ENCODE measurements at regions of chr4 and their contacts with region 1.

Region 1: GRCh38 chr4:77959566-77960338 is 97.1 kb downstream of the MRPL1 start:
- DNase-seq: peak; percentile 34 to 60 (median 45)
- ATAC-seq: peak; percentile 66
- H3K4me3 ChIP-seq: no peak overlapping the region
- H3K27ac ChIP-seq: no peak overlapping the region
- H3K4me1 ChIP-seq: no peaks in the 10 kb centered on the region
- H3K27me3 ChIP-seq: no peaks in the 10 kb centered on the region
- CTCF ChIP-seq: peak; percentile 43 to 64 (median 44); a peak in 3 of 6 replicates
- EP300 ChIP-seq: no peak
- POLR2A ChIP-seq: no peak
- RAD21 ChIP-seq: peak; percentile 68 to 73

Region 2: GRCh38 chr4:77862478-77863216 is 97.1 kb before region 1 on chr4 and contains the start of gene MRPL1:
- CTCF ChIA-PET with region 1: no interaction called
- POLR2A ChIA-PET with region 1: no interaction called
- in situ Hi-C with region 1: no loop called
- intact Hi-C with region 1: loop called (anchors 5 kb)
- DNase-seq: peak; percentile 75 to 94 (median 80)
- ATAC-seq: peak; percentile 94
- H3K4me3 ChIP-seq: peak within 1 kb of the TSS; percentile 87
- H3K27ac ChIP-seq: peak within 1 kb of the TSS; percentile 88
- H3K4me1 ChIP-seq: peaks cover 0 to 5% of the 10 kb centered on the region in 2 experiments; a peak in 2 of 5 replicates
- H3K27me3 ChIP-seq: no peaks in the 10 kb centered on the region
- CTCF ChIP-seq: no peak
- EP300 ChIP-seq: peak; percentile 68
- POLR2A ChIP-seq: peak; percentile 96
- RAD21 ChIP-seq: peak; percentile 2 to 5; a peak in 1 of 4 replicates
- polyA plus RNA-seq, gene MRPL1: 65.4 to 75.7 TPM

Region 3: GRCh38 chr4:78288327-78288726 is 328.6 kb after region 1 on chr4:
- CTCF ChIA-PET with region 1: no interaction called
- POLR2A ChIA-PET with region 1: no interaction called
- in situ Hi-C with region 1: no loop called
- intact Hi-C with region 1: no loop called
- DNase-seq: no peak
- ATAC-seq: no peak
- H3K4me3 ChIP-seq: no peak overlapping the region
- H3K27ac ChIP-seq: no peak overlapping the region
- H3K4me1 ChIP-seq: no peaks in the 10 kb centered on the region
- H3K27me3 ChIP-seq: peaks cover 0 to 15% of the 10 kb centered on the region in 2 experiments; a peak in 2 of 5 replicates
- CTCF ChIP-seq: no peak
- EP300 ChIP-seq: no peak
- POLR2A ChIP-seq: no peak
- RAD21 ChIP-seq: no peak

Region 4: DNA sequence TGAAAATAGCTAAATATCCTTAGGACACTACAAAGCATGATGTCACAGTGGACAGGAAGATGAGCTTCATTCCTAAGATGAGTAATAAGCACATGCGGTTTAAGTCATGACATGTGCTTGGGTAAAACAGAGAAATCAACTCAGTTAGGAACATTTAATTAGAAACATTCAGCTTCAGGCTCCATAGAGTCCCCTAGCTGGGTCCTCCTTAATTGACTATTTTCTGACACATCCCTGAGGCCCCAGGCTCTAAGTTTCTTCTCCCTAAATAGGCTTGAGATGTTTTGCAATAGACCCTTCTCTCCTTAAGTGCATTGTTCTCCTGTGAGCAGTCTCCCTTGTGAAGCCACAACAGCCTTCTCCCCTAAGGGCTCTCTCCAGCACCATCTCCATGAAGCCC is 521.4 kb after region 1 on chr4:
- CTCF ChIA-PET with region 1: no interaction called
- POLR2A ChIA-PET with region 1: no interaction called
- in situ Hi-C with region 1: loop called (anchors 10 kb)
- intact Hi-C with region 1: no loop called
- DNase-seq: no peak
- ATAC-seq: no peak
- H3K4me3 ChIP-seq: no peak overlapping the region
- H3K27ac ChIP-seq: no peak overlapping the region
- H3K4me1 ChIP-seq: peaks cover 0 to 19% of the 10 kb centered on the region in 2 experiments; a peak in 2 of 5 replicates
- H3K27me3 ChIP-seq: peaks cover 0 to 4% of the 10 kb centered on the region in 2 experiments; a peak in 1 of 5 replicates
- CTCF ChIP-seq: no peak
- EP300 ChIP-seq: no peak
- POLR2A ChIP-seq: no peak
- RAD21 ChIP-seq: no peak

Region 5: DNA sequence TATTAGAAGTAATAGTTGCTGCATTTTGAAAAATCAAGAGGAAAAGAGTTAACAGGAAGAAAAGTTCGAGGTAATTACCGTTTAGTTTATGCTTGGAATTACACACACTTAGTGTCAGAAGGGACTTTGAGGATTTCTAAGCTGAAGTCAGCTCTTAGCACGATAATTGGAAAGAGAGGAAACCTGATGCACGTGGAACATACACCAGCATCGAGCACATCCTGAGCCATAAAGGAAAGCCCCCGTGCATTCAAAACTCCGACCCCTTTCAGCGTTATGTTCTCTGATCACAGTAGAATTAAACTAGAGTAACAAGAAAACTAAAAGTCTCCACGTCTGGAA is 979.9 kb after region 1 on chr4:
- CTCF ChIA-PET with region 1: no interaction called
- POLR2A ChIA-PET with region 1: no interaction called
- in situ Hi-C with region 1: no loop called
- intact Hi-C with region 1: loop called (anchors 10 kb)
- DNase-seq: peak in 1 of 4 experiments; percentile 18
- ATAC-seq: peak; percentile 13
- H3K4me3 ChIP-seq: peak overlapping the region; percentile 68
- H3K27ac ChIP-seq: peak overlapping the region; percentile 68; the same call in 2 of the 3 replicates
- H3K4me1 ChIP-seq: peaks cover 10 to 19% of the 10 kb centered on the region in 2 experiments; a peak in 4 of 5 replicates
- H3K27me3 ChIP-seq: no peaks in the 10 kb centered on the region
- CTCF ChIP-seq: no peak
- EP300 ChIP-seq: no peak
- POLR2A ChIP-seq: no peak
- RAD21 ChIP-seq: no peak